Activated naive CD4-positive, alpha-beta T cell treated with anti-CD3 and anti-CD28 coated beads for 36 hours (primary cell): ENCODE measurements at regions of chr2 and their contacts with region 1.

Region 1: DNA sequence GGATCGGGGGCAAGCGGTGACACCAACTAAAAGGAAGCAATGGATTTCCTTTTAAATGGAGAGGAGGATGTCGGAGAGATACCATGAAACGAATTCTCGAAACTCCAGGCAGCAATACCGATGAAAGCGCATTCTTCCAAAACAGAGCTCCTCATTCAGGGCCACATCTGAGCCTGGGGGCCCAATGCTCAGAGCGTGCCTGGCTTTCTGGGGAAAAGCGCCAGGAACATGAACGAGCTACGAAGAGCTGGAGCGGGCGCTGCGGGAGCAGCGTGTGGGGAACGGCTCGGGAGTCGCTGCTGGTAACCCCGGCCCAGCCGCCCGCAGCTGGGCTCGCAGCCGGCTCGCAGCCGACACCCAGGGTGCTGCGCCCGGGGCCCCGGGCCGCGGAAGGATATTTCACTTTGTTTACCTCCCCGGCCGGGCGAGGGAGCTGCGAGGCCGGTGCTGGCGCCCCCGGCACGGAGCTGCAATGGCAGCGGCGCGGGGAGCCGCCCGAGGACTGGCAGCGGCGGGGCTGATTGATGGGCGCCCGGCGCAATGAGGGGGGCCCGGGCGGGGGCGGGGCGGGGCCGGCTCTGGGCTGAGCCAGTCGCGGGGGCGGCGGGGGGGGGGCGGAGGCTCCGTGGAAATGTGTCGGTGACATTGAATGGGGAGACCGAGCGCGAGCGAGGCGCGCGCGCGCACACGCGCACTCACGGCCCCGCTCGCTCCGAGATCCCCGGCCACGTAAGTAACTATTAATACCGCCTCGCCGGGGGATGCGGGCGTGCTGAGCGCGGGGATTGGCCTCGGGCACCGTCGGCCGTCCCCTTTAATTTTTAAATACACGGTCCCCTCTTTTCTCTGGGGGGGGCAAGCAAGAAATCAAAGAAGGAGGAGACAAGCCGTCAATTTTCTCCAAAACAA is at the start of gene TRIB2:
- DNase-seq: peak; percentile 84
- H3K4me3 Mint-ChIP-seq: peak within 1 kb of the TSS; percentile 96
- H3K27ac Mint-ChIP-seq: peak within 1 kb of the TSS; percentile 76
- H3K4me1 Mint-ChIP-seq: peaks cover 46% of the 10 kb centered on the region
- H3K27me3 Mint-ChIP-seq: peaks cover 1% of the 10 kb centered on the region
- total RNA-seq, gene TRIB2: 3.7 to 4.4 TPM

Region 2: GRCh38 chr2:11688222-11689069 is 1028.1 kb before region 1 on chr2:
- CTCF ChIA-PET with region 1: no interaction called
- intact Hi-C with region 1: loop called (anchors 5 kb)
- DNase-seq: peak; percentile 89
- H3K4me3 Mint-ChIP-seq: peak overlapping the region; percentile 32
- H3K27ac Mint-ChIP-seq: no peak overlapping the region
- H3K4me1 Mint-ChIP-seq: peaks cover 10% of the 10 kb centered on the region
- H3K27me3 Mint-ChIP-seq: peaks cover 5% of the 10 kb centered on the region

Region 3: DNA sequence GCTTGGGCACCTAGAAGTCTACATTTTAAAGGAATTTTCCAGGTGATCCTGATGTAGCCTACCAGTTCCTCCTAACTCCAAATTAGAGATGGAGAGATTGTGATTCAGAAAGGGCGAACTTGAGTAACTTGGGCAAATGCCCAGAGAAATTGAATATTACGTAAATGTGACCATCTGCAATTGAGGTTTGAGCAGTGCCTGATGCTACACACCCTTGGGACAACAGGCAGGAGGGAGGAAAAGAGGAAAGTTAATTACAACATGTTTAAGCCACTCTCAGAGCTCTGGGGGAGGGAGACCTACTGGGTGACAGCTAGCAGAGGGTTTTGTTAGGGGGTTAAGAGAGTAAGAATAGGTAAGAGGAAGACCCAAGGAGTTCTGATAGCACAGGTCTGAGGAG is 761.2 kb before region 1 on chr2:
- CTCF ChIA-PET with region 1: no interaction called
- intact Hi-C with region 1: loop called (anchors 1 kb)
- DNase-seq: no peak
- H3K4me3 Mint-ChIP-seq: no peak overlapping the region
- H3K27ac Mint-ChIP-seq: no peak overlapping the region
- H3K4me1 Mint-ChIP-seq: peaks cover 3% of the 10 kb centered on the region
- H3K27me3 Mint-ChIP-seq: peaks cover 2% of the 10 kb centered on the region

Region 4: GRCh38 chr2:12169721-12170120 is 546.8 kb before region 1 on chr2:
- CTCF ChIA-PET with region 1: interaction called, 5 read pairs
- intact Hi-C with region 1: loop called (anchors 2 kb)
- DNase-seq: peak; percentile 69
- H3K4me3 Mint-ChIP-seq: no peak overlapping the region
- H3K27ac Mint-ChIP-seq: no peak overlapping the region
- H3K4me1 Mint-ChIP-seq: peaks cover 42% of the 10 kb centered on the region
- H3K27me3 Mint-ChIP-seq: no peaks in the 10 kb centered on the region

Region 5: DNA sequence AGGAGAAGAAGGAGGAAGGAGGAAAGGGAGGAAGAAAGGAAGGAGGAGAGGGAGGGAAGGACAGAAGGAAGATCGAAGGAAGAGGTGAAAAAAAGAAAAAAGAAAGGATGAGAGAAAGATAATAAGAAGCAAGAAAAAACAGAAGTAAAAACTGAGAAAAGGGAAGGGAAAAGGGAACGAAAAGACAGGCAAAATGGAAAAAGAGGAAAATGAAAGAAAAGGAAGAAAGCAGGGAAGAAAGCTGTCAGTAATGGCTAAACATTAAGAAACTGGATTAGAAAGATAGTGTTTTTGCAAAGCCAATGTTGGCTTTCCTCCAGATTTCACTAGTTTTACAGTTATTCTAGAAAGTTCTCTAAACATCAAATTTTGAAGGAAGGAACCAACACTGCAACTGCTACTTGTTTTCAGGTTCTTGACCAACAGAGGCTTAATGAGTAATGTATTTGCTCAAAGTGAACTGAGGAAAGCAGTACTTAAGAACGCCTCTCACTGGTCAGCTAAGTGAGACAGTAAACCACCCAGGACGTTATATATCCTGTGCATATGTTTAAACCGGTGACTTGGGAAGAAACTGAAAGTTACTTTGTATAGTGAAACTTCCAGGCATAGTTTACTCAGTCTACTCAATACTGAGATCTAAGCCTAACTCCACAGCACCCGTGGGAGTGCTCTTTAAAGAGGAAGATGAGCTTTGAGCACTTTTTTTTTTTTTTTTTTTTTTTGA is 286.0 kb before region 1 on chr2:
- CTCF ChIA-PET with region 1: interaction called, 6 read pairs
- intact Hi-C with region 1: loop called (anchors 1 kb)
- DNase-seq: peak; percentile 36
- H3K4me3 Mint-ChIP-seq: no peak overlapping the region
- H3K27ac Mint-ChIP-seq: no peak overlapping the region
- H3K4me1 Mint-ChIP-seq: peaks cover 30% of the 10 kb centered on the region
- H3K27me3 Mint-ChIP-seq: no peaks in the 10 kb centered on the region

Region 6: GRCh38 chr2:12702305-12703121 is 14.0 kb before region 1 on chr2:
- CTCF ChIA-PET with region 1: interaction called, 12 read pairs
- intact Hi-C with region 1: no loop called
- DNase-seq: no peak
- H3K4me3 Mint-ChIP-seq: no peak overlapping the region
- H3K27ac Mint-ChIP-seq: no peak overlapping the region
- H3K4me1 Mint-ChIP-seq: peaks cover 41% of the 10 kb centered on the region
- H3K27me3 Mint-ChIP-seq: no peaks in the 10 kb centered on the region

Region 7: DNA sequence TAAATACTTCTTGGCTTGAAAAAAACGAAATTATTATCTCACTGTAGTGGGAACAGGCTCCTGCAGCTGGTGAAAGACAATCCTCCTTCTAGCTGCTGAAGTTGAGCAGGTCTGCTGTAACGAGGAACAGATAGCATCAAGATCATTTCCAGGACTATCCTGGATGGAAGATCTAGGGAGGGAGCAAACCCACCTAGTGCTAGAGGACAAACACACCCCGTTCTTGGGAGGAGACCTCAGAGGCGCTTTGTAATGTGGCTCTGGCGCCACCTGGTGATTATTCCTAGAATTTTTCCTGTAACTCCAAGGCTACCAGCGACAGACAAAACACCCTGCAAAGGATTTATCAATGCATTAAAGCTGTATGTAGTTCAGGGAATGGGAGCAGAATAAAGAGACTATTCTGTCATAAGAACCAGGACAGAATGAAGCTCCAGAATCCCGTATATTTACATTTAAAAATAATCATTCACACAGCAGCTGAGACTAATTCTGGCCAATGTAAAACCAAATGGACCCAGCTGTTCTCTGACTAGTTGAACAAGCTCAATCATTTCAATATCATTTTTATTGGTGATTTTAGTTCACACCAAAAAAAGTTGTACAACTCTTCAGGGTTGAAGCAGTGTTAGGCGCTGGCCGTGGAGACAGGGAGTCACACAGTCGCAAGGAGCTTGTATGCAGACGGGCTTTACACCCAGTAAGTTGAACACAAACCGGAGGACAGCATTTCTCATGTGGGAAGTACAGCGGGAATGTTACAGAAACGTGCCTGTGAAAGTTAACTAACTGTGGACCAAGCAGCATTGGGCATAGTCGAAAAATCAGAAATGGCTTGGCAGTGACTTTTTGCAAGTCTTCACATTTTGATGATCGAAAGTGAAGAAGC is 290.5 kb after region 1 on chr2:
- CTCF ChIA-PET with region 1: interaction called, 17 read pairs
- intact Hi-C with region 1: loop called (anchors 1 kb)
- DNase-seq: peak; percentile 72
- H3K4me3 Mint-ChIP-seq: no peak overlapping the region
- H3K27ac Mint-ChIP-seq: no peak overlapping the region
- H3K4me1 Mint-ChIP-seq: no peaks in the 10 kb centered on the region
- H3K27me3 Mint-ChIP-seq: peaks cover 9% of the 10 kb centered on the region